ENCODE measurements at regions of chr2 and their contacts with region 1.

Region 1: GRCh38 chr2:239318790-239319661 is 81.8 kb downstream of the HDAC4 start:
- DNase-seq: peak; percentile 42 to 57 (median 51)
- H3K4me3 ChIP-seq: peak overlapping the region; percentile 5 to 68 (median 34)
- H3K4me3 Mint-ChIP-seq: peak overlapping the region; percentile 78 to 80
- H3K27ac ChIP-seq: peak overlapping the region; percentile 83 to 89
- H3K27ac Mint-ChIP-seq: peak overlapping the region; percentile 89 to 97 (median 94)
- H3K4me1 ChIP-seq: peaks cover 32 to 38% of the 10 kb centered on the region in 2 donors
- H3K4me1 Mint-ChIP-seq: peaks cover 51% of the 10 kb centered on the region
- H3K27me3 ChIP-seq: no peaks in the 10 kb centered on the region
- H3K27me3 Mint-ChIP-seq: peaks cover 0 to 2% (median 0%) of the 10 kb centered on the region in 3 donors
- CTCF ChIP-seq: no peak

Region 2: DNA sequence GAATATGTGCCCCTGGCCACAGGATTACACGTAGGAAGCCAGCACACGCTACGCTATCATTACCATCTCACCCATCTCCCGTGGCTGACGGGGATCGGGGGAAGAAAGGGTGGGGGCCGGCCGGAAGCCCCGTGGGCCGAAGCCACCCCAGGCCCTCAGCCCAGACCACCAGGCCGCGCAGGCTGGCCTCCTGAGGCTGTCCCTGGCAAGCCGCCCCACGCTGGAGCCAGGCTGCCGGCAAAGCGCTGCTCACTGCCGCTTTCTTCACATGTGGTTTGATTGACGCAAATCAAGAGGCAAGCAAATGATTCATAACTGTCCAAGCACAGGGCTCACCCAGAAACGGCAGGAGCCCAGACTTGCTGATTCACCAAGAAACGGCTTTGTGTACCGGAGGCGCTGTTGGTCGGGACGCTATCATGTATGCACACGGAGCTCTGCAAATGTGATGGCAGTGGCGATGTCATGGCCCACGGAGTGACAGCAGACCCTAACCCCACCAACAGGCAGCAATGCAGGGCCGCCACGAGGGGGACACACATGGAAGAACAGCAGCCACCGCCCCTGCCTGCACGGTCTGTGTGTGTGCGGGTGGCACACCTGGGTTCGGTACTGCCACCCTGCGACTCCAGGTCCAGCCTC is 43.9 kb before region 1 on chr2:
- intact Hi-C with region 1: loop called in 1 of 2 experiments (anchors 5 kb)
- DNase-seq: peak; percentile 93 to 98 (median 94)
- H3K4me3 ChIP-seq: peak overlapping the region in 2 of 3 experiments; percentile 22 to 61
- H3K4me3 Mint-ChIP-seq: peak overlapping the region; percentile 80 to 81
- H3K27ac ChIP-seq: peak overlapping the region; percentile 83 to 93
- H3K27ac Mint-ChIP-seq: peak overlapping the region; percentile 88 to 99 (median 98)
- H3K4me1 ChIP-seq: peaks cover 64 to 89% of the 10 kb centered on the region in 2 donors
- H3K4me1 Mint-ChIP-seq: peaks cover 72% of the 10 kb centered on the region
- H3K27me3 ChIP-seq: no peaks in the 10 kb centered on the region
- H3K27me3 Mint-ChIP-seq: peaks cover 0 to 4% (median 0%) of the 10 kb centered on the region in 3 donors
- CTCF ChIP-seq: no peak